B cell (primary cell): ENCODE measurements at regions of chr19 and their contacts with region 1.

Region 1: DNA sequence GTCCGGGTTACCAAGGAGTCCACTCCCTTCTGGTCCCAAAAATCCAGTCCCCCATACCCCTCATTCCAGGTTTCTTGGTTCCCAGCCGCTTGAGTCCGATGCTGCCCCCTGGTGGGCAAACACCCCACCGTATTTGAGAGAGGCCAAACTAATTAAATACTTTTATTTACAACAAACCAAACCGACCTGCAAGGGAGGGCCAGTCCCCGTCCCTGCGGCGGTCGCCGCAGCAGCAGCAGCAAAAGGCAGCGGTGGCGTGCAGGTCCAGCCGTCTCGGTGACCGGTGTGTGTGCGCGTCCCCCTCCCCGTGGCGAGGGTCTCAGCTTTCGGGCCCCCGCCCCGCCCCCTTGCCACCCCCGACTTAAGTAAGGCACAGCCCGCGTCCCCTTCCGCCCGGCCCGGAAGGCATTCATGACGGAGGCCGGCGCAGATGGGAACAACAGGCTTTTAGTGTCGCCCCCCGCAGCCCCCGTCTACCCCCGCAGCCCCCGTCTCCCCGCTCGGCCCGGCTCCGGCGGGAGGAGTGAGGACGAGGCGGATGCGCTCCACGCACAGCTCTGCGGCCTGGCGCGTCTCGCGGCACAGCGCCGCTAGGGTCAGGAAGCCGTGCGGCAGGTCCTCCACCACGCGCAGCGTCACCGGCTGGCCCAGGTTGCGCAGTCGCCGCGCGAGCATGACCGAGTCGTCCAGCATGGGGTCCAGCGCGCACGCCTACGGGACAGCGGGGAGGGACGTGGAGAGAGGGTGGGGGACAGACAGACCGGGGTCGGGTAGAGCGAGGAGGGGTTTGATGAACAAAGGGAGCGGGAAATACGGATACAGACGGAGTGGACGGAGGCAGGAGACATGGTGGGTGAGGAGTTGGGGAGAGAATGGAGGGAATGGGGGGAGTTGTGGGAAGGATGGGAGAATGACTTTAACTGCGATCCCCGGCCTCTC is 11.5 kb upstream of the CNFN start:
- DNase-seq: peak; percentile 85
- ATAC-seq: peak; percentile 50
- H3K4me3 ChIP-seq: peak overlapping the region in 4 of 5 experiments; percentile 45 to 67 (median 52)
- H3K4me3 Mint-ChIP-seq: peak overlapping the region; percentile 89
- H3K27ac ChIP-seq: peak overlapping the region in 1 of 2 donors; percentile 15
- H3K27ac Mint-ChIP-seq: peak overlapping the region; percentile 87
- H3K4me1 ChIP-seq: peaks cover 21 to 35% of the 10 kb centered on the region in 2 donors
- H3K4me1 Mint-ChIP-seq: peaks cover 41% of the 10 kb centered on the region
- H3K27me3 ChIP-seq: no peaks in the 10 kb centered on the region
- H3K27me3 Mint-ChIP-seq: no peaks in the 10 kb centered on the region
- CTCF ChIP-seq: peak; percentile 82

Region 2: GRCh38 chr19:42229855-42230351 is 171.7 kb before region 1 on chr19:
- CTCF ChIA-PET with region 1: no interaction called
- POLR2A ChIA-PET with region 1: no interaction called
- intact Hi-C with region 1: no loop called
- DNase-seq: no peak
- ATAC-seq: no peak
- H3K4me3 ChIP-seq: no peak overlapping the region
- H3K4me3 Mint-ChIP-seq: no peak overlapping the region
- H3K27ac ChIP-seq: no peak overlapping the region
- H3K27ac Mint-ChIP-seq: no peak overlapping the region
- H3K4me1 ChIP-seq: no peaks in the 10 kb centered on the region
- H3K4me1 Mint-ChIP-seq: peaks cover 6% of the 10 kb centered on the region
- H3K27me3 ChIP-seq: no peaks in the 10 kb centered on the region
- H3K27me3 Mint-ChIP-seq: no peaks in the 10 kb centered on the region
- CTCF ChIP-seq: no peak

Region 3: DNA sequence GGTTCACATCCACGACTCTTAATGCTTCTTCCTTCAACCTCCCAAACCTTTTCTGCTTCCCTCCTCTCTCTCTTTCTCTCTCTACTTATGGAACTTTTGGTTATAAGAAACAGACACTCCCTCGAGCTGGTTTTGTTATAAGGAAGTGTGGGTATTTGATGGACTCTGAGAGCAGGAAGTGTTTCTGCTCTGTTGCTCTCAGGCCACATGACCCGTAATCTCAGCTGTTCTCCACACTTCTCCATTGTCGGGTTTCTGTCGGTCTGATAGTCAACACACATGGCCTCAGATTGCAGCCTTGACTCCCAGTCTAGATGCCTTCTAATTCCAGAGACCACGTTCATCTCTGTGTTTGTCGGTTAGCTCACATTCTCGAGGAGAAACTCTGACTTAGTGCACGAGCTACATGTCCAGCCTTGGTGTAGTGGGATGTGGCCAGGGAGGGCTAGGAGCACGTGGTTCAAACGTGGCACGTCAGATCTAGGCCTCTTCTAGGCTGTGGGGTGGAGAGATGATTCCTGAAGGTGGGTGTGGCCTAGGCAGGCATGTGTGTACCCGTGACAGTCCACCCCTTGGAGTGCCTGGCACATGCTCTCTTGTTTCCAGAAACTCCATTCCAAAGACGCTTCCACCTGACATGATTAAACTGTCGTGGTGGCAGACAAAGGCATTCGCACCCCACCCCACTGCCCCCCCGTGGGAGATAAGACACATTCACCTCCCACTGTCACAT is 37.9 kb before region 1 on chr19:
- CTCF ChIA-PET with region 1: interaction called, 18 read pairs
- POLR2A ChIA-PET with region 1: interaction called, 11 read pairs
- intact Hi-C with region 1: loop called (anchors 1 kb)
- DNase-seq: peak; percentile 82
- ATAC-seq: peak; percentile 54
- H3K4me3 ChIP-seq: peak overlapping the region in 1 of 5 experiments; percentile 11
- H3K4me3 Mint-ChIP-seq: peak overlapping the region; percentile 17
- H3K27ac ChIP-seq: peak overlapping the region; percentile 81 to 87
- H3K27ac Mint-ChIP-seq: peak overlapping the region; percentile 86
- H3K4me1 ChIP-seq: peaks cover 38 to 47% of the 10 kb centered on the region in 2 donors
- H3K4me1 Mint-ChIP-seq: peaks cover 47% of the 10 kb centered on the region
- H3K27me3 ChIP-seq: no peaks in the 10 kb centered on the region
- H3K27me3 Mint-ChIP-seq: no peaks in the 10 kb centered on the region
- CTCF ChIP-seq: no peak

Region 4: DNA sequence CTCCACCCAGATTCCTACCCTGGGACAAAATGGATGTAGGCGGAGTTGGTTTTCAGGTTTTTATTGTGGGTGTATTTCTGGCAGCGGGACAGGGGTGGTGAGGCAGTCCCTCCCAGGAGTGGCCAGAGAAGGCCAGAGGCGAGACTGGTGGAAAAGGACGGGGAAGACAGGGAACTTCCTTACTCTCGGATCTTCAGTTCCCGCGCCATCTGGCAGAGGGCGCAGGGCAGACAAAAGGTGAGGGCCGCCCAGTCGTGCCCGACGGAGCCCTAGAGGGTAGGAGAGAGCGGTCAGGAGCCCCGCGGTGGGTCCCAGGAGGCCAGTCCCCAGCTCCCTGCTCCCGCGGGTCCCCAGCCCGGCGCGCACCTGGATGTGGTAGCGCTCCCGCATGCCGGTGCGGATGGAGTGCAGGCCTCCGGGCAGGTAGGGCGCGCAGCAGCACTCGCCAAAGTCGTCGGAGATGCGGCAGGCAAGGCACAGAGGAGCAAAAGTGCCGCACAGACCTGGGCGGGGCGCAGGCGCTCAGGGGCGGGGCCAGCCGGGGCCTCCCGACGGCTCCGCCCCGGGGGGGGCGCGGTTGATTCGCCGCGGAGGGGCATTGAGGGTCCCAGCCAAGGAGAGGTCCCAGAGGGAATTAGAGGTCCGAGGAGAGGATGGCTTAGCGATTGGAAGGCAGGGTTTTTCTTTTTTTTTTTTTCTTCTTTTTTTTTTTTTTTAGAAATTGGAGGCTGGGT is 14.5 kb before region 1 on chr19:
- CTCF ChIA-PET with region 1: interaction called, 27 read pairs
- POLR2A ChIA-PET with region 1: interaction called, 3 read pairs
- intact Hi-C with region 1: loop called (anchors 1 kb)
- DNase-seq: peak; percentile 90
- ATAC-seq: peak; percentile 93
- H3K4me3 ChIP-seq: peak overlapping the region in 4 of 5 experiments; percentile 53 to 68 (median 64)
- H3K4me3 Mint-ChIP-seq: peak overlapping the region; percentile 86
- H3K27ac ChIP-seq: peak overlapping the region; percentile 23 to 33
- H3K27ac Mint-ChIP-seq: peak overlapping the region; percentile 80
- H3K4me1 ChIP-seq: peaks cover 5 to 12% of the 10 kb centered on the region in 2 donors
- H3K4me1 Mint-ChIP-seq: peaks cover 7% of the 10 kb centered on the region
- H3K27me3 ChIP-seq: peaks cover 0 to 18% (median 6%) of the 10 kb centered on the region in 4 experiments
- H3K27me3 Mint-ChIP-seq: peaks cover 26% of the 10 kb centered on the region
- CTCF ChIP-seq: peak; percentile 74

Region 5: GRCh38 chr19:42423462-42424344 is 22.1 kb after region 1 on chr19:
- CTCF ChIA-PET with region 1: interaction called, 13 read pairs
- POLR2A ChIA-PET with region 1: interaction called, 3 read pairs
- intact Hi-C with region 1: loop called (anchors 1 kb)
- DNase-seq: peak; percentile 96
- ATAC-seq: peak; percentile 88
- H3K4me3 ChIP-seq: peak overlapping the region; percentile 75 to 98 (median 85)
- H3K4me3 Mint-ChIP-seq: peak overlapping the region; percentile 98
- H3K27ac ChIP-seq: peak overlapping the region; percentile 78 to 85
- H3K27ac Mint-ChIP-seq: peak overlapping the region; percentile 99
- H3K4me1 ChIP-seq: peaks cover 22 to 40% of the 10 kb centered on the region in 2 donors
- H3K4me1 Mint-ChIP-seq: peaks cover 46% of the 10 kb centered on the region
- H3K27me3 ChIP-seq: peaks cover 0 to 2% (median 0%) of the 10 kb centered on the region in 4 experiments
- H3K27me3 Mint-ChIP-seq: no peaks in the 10 kb centered on the region
- CTCF ChIP-seq: no peak

Region 6: GRCh38 chr19:42440357-42441048 is 38.9 kb after region 1 on chr19:
- CTCF ChIA-PET with region 1: interaction called, 11 read pairs
- POLR2A ChIA-PET with region 1: no interaction called
- intact Hi-C with region 1: no loop called
- DNase-seq: peak; percentile 83
- ATAC-seq: peak; percentile 57
- H3K4me3 ChIP-seq: no peak overlapping the region
- H3K4me3 Mint-ChIP-seq: no peak overlapping the region
- H3K27ac ChIP-seq: no peak overlapping the region
- H3K27ac Mint-ChIP-seq: no peak overlapping the region
- H3K4me1 ChIP-seq: peaks cover 0 to 7% of the 10 kb centered on the region in 2 donors
- H3K4me1 Mint-ChIP-seq: peaks cover 8% of the 10 kb centered on the region
- H3K27me3 ChIP-seq: peaks cover 0 to 5% (median 0%) of the 10 kb centered on the region in 4 experiments
- H3K27me3 Mint-ChIP-seq: peaks cover 16% of the 10 kb centered on the region
- CTCF ChIP-seq: peak; percentile 96